ENCODE measurements at regions of chr11 and their contacts with region 1.

Region 1: GRCh38 chr11:65817835-65818742 is 15.7 kb upstream of the SNX32 start:
- DNase-seq: peak; percentile 5
- H3K4me3 ChIP-seq: peak overlapping the region; percentile 79
- CTCF ChIP-seq: peak; percentile 96

Region 2: DNA sequence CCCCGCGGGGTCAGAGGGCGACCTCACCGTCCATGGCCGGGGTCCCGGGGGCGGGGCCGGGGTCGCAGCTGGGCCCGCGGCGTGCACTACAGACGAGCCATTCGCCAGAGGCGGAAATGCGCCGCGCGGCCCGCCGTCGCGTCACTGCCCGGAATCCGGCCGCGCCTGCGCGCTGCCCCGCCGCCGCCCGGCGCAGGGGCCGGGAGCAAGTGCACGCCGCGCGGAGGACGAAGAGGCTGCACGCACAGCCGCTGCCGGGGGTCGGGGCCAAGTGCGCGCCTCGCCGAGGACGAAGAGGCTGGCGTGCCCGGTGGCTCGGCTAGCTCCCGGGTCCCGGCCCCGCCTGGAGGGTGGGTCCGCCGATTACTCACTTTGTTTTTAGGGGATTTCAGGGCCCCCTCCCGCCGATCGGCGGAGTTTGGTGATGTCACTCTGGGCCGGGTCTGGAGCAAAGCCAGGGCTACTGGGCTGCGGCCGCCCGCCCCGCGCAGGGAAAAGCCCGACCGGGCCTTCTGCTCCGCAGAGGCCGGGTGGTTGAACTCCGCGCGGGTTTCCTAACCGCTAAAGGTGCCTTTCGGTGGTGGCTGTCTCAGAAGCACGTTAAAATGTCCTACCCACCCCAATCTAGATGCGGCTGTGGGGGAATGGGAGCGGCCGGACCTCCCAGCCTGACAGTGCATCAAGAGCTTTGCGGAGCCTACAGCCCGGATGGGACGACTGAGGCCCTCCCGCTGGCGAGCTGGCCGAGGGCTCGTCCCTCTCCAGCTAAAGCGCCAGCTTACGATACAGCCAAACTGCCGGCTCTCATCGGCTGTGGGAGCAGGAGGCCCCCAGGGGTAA is 155.1 kb before region 1 on chr11 and contains the start of gene RELA:
- CTCF ChIA-PET with region 1: interaction called, 23 read pairs
- POLR2A ChIA-PET with region 1: no interaction called
- DNase-seq: peak; percentile 63
- H3K4me3 ChIP-seq: peak within 1 kb of the TSS; percentile 97
- CTCF ChIP-seq: no peak

Region 3: DNA sequence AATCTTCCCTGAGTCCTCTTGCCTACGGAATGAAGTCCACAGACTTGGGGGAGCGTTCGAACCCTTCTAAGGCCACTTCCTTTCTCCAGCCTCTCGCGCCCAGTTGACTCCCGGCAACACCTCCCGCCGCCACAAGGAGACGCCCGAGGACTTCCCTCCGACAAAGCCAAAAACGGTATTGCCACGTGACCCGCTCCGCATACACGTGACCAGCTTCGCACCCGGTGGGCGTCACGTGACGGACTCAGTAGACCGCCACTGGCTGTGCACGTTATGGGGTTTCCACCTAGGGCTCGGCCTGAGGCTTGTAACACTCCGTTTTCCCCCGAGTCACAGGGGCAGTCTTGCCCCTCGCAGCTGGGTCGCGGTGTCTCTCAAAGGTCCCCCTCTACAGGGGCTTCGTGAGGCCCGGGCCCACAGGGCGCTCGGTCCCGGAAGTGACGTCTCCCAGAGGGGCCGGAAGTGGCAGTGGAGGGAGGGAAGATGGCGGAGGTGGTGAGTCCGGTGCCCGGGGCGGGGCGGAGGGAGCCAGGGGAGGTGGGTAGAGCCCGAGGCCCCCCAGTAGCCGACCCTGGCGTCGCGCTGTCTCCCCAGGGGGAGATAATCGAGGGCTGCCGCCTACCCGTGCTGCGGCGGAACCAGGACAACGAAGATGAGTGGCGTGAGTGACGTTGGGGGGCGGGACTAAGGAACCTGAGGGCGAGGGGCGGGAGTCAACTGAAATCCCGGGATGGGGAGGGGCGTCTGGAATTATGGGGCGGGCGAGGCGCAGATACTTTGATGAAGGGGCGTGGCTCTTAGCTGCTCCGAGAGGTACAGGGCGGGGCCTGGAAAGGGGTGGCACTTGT is 106.1 kb before region 1 on chr11 and contains the start of gene KAT5:
- CTCF ChIA-PET with region 1: interaction called, 170 read pairs
- POLR2A ChIA-PET with region 1: interaction called, 3 read pairs
- DNase-seq: peak; percentile 83
- H3K4me3 ChIP-seq: peak within 1 kb of the TSS; percentile 87
- CTCF ChIP-seq: peak; percentile 94

Region 4: DNA sequence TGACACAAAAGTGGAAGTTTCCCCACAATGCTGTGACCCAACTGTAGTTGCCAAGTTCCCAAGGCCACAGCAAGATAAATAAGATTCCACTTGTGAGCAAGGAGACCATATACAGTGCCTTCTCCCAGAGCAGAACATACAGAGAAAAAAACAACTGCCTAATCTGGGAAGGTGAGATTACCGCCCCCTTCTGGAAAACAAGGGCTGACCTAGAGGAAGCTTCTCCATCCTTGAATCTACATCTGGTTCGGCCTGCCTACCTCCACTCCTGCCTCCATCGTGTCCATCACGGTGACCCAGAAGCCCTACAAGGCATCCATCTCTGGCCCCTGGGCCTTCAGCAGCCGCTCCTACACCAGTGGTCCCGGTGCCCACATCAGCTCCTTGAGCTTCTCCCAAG is 91.4 kb before region 1 on chr11:
- CTCF ChIA-PET with region 1: interaction called, 16 read pairs
- POLR2A ChIA-PET with region 1: no interaction called
- DNase-seq: no peak
- H3K4me3 ChIP-seq: no peak overlapping the region
- CTCF ChIP-seq: no peak

Region 5: GRCh38 chr11:65773784-65774411 is 44.2 kb before region 1 on chr11:
- CTCF ChIA-PET with region 1: interaction called, 25 read pairs
- POLR2A ChIA-PET with region 1: no interaction called
- DNase-seq: no peak
- H3K4me3 ChIP-seq: no peak overlapping the region
- CTCF ChIP-seq: no peak

Region 6: GRCh38 chr11:65796726-65797601 is 21.1 kb before region 1 on chr11:
- CTCF ChIA-PET with region 1: interaction called, 25 read pairs
- POLR2A ChIA-PET with region 1: no interaction called
- DNase-seq: no peak
- H3K4me3 ChIP-seq: no peak overlapping the region
- CTCF ChIP-seq: no peak

Region 7: GRCh38 chr11:65833297-65834030 is 15.4 kb after region 1 on chr11 and contains the start of gene SNX32:
- CTCF ChIA-PET with region 1: interaction called, 107 read pairs
- POLR2A ChIA-PET with region 1: no interaction called
- DNase-seq: no peak
- H3K4me3 ChIP-seq: peak within 1 kb of the TSS; percentile 75
- CTCF ChIP-seq: no peak

Region 8: GRCh38 chr11:66084821-66085475 is 266.9 kb after region 1 on chr11:
- CTCF ChIA-PET with region 1: no interaction called
- POLR2A ChIA-PET with region 1: no interaction called
- DNase-seq: no peak
- H3K4me3 ChIP-seq: no peak overlapping the region
- CTCF ChIP-seq: no peak

Region 9: GRCh38 chr11:66168289-66168688 is 350.2 kb after region 1 on chr11:
- CTCF ChIA-PET with region 1: no interaction called
- POLR2A ChIA-PET with region 1: no interaction called
- DNase-seq: no peak
- H3K4me3 ChIP-seq: no peak overlapping the region
- CTCF ChIP-seq: no peak

Measured in AG04449 (cell line).